ENCODE measurements at regions of chr12 and their contacts with region 1.

Region 1: DNA sequence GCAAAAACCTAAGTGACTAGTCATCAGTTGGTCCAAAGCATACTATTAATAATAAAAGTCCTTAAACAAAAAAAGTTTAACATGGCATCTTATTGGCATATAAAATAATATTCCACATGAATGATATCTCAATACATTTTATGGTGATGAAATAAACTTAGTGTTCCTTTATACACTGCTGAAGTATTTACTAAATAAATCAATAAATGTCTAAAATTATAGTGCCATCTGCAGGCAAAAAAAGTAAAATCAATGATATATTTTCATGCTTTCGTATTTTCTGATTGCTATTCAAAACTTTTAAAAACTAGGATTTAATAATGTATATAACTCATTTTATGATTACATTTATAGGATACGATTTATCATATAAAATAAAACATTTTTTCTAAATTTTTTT is 30.5 kb downstream of the PUS7L start:
- DNase-seq: peak; percentile 4
- H3K4me3 ChIP-seq: no peak overlapping the region
- H3K27ac ChIP-seq: no peak overlapping the region
- H3K4me1 ChIP-seq: no peaks in the 10 kb centered on the region
- H3K27me3 ChIP-seq: no peaks in the 10 kb centered on the region
- CTCF ChIP-seq: no peak
- POLR2A ChIP-seq: no peak

Region 2: DNA sequence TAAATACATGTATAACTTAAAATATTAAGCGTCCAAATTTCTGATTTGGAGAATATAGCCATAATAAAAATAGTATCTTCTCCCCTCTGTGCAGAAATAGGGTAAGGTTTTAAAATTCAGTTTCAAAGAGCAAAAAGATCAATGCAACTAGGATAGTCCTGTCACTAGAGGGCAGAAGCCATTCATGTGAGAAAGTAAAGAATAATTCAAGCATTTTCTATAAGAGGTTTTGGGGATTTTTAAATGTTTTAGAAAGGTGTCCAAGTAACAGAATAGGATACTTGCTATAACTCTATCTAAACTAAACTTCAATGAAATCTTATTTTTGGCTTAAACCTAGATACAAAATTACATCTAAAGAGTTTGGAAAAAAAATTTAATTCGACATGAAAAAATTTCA is 226.4 kb before region 1 on chr12:
- CTCF ChIA-PET with region 1: interaction called, 5 read pairs
- POLR2A ChIA-PET with region 1: no interaction called
- dilution Hi-C with region 1: no loop called
- intact Hi-C with region 1: loop called (anchors 1 kb)
- DNase-seq: peak; percentile 12
- H3K4me3 ChIP-seq: no peak overlapping the region
- H3K27ac ChIP-seq: no peak overlapping the region
- H3K4me1 ChIP-seq: no peaks in the 10 kb centered on the region
- H3K27me3 ChIP-seq: no peaks in the 10 kb centered on the region
- CTCF ChIP-seq: peak; percentile 14 to 18
- POLR2A ChIP-seq: no peak

Region 3: DNA sequence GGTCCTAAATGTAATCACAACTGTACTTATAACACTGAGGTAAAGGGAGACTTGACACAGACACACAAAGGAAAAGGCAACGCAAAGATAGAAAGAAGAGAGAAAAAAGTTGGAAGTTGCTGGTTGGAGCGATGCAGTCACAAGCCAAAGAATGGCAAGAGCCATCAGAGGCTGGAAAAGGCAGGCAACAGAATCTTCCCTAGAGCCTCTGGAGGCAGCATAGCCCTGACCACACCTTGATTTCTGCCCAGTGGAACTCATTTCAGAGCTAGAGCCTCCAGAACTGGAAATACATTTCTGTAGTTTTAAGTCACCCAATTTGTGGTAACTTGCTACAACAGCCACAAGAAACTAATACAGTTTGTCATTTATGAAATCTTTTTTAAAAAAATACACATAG is 58.7 kb before region 1 on chr12:
- CTCF ChIA-PET with region 1: no interaction called
- POLR2A ChIA-PET with region 1: no interaction called
- dilution Hi-C with region 1: no loop called
- intact Hi-C with region 1: loop called (anchors 10 kb)
- DNase-seq: no peak
- H3K4me3 ChIP-seq: no peak overlapping the region
- H3K27ac ChIP-seq: no peak overlapping the region
- H3K4me1 ChIP-seq: no peaks in the 10 kb centered on the region
- H3K27me3 ChIP-seq: peaks cover 0 to 4% of the 10 kb centered on the region in 2 experiments
- CTCF ChIP-seq: no peak
- POLR2A ChIP-seq: no peak

Region 4: DNA sequence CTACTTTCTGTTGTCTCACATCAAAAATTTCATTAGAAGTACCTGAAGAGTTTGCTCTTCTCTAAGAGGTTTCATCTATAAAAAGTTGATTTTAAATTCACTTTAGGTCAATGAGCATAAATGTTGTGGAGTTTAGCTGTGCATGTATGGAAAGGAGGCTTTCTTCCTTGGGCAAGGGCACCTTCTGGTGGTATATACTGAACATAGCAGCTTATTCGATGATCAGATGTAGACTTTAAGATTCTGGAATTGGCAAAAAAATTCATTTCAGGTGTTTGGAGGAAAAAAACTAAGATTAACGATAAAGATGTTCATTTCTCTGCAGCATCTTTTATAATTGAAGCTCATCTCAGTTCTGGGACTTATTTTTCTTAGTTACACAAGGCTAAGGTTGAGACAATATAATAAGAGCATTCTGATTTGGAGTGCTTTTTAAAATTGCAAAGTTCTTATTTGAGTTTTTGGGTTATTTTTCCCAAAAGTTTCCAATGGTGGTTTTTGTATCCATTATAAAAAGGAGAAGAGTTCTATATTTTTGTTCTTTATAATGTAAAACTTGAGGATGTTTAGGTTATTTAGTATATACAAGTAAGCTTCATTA is 154.6 kb after region 1 on chr12:
- CTCF ChIA-PET with region 1: no interaction called
- POLR2A ChIA-PET with region 1: no interaction called
- dilution Hi-C with region 1: no loop called
- intact Hi-C with region 1: no loop called
- DNase-seq: peak; percentile 65
- H3K4me3 ChIP-seq: no peak overlapping the region
- H3K27ac ChIP-seq: no peak overlapping the region
- H3K4me1 ChIP-seq: no peaks in the 10 kb centered on the region
- H3K27me3 ChIP-seq: no peaks in the 10 kb centered on the region
- CTCF ChIP-seq: peak; percentile 48 to 58
- POLR2A ChIP-seq: no peak

Measured in endothelial cell of umbilical vein (primary cell).